ENCODE measurements at regions of chr2 and their contacts with region 1.

Region 1: DNA sequence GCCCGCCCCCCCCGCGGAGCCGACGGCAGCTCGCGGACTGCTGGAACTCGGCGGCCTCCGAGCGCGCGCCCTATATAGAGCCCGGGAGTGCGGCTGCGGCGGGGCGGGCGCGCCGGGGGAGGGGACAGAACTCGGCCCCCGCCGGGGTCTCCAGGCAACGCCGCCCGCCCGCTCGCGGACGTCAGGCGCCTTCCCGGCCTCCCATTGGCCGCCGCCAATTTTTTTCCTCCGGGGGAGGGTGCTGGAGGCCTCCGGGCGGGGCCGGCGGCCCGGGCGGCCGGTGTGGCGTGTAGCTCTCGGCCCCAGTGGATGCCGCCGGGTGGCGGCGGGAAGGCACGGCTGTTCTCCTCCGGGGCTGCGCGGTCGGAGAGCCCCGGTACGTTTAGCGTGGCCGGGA is at the start of gene ZFP36L2:
- DNase-seq: no peak
- ATAC-seq: peak; percentile 69
- H3K4me3 ChIP-seq: peak within 1 kb of the TSS; percentile 84
- H3K27ac ChIP-seq: peak within 1 kb of the TSS; percentile 97
- H3K4me1 ChIP-seq: peaks cover 22% of the 10 kb centered on the region
- H3K27me3 ChIP-seq: no peaks in the 10 kb centered on the region
- CTCF ChIP-seq: no peak
- EP300 ChIP-seq: peak in 1 of 2 experiments; percentile 40; a peak in 1 of 4 replicates
- POLR2A ChIP-seq: no peak
- RAD21 ChIP-seq: no peak
- polyA plus RNA-seq, gene ZFP36L2: 25.5 to 43.3 TPM

Region 2: GRCh38 chr2:42828487-42829425 is 397.8 kb before region 1 on chr2:
- CTCF ChIA-PET with region 1: interaction called, 5 read pairs
- POLR2A ChIA-PET with region 1: no interaction called
- RAD21 ChIA-PET with region 1: interaction called, 5 read pairs
- SMC1A ChIA-PET with region 1: interaction called, 4 read pairs
- in situ Hi-C with region 1: no loop called
- intact Hi-C with region 1: loop called (anchors 2 kb)
- DNase-seq: peak; percentile 15
- ATAC-seq: peak; percentile 97
- H3K4me3 ChIP-seq: no peak overlapping the region
- H3K27ac ChIP-seq: no peak overlapping the region
- H3K4me1 ChIP-seq: no peaks in the 10 kb centered on the region
- H3K27me3 ChIP-seq: no peaks in the 10 kb centered on the region; a peak in 1 of 4 replicates
- CTCF ChIP-seq: peak; percentile 92 to 98 (median 93)
- EP300 ChIP-seq: no peak
- POLR2A ChIP-seq: no peak
- RAD21 ChIP-seq: peak; percentile 82

Region 3: DNA sequence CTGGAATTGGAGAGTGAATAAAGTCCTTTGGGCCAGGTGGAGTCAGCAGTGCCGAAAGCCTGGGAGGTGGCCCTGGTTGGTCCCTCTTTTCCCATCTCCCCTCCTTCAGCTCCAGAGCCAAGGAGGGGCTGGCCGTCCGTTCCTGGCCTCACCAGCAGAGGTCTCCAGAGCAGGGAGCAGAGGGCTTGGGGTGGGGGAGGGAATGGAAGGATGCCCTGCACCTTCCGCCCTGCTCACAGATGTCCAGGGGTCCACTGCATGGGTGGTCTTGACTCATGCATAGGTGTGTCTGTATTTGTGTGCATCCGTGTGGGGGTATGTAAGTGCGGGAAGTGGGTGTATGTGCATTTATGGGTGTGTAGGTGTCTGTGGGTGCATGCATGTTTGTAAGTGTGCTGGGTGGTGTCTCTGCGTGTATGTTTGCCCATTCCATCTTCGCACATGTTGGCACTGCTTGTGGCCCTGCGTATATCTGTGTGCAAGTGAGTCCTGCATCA is 202.0 kb before region 1 on chr2:
- CTCF ChIA-PET with region 1: interaction called, 47 read pairs
- POLR2A ChIA-PET with region 1: interaction called, 3 read pairs
- RAD21 ChIA-PET with region 1: interaction called, 32 read pairs
- SMC1A ChIA-PET with region 1: interaction called, 37 read pairs
- in situ Hi-C with region 1: no loop called
- intact Hi-C with region 1: loop called (anchors 2 kb)
- DNase-seq: no peak
- ATAC-seq: peak; percentile 93
- H3K4me3 ChIP-seq: no peak overlapping the region
- H3K27ac ChIP-seq: no peak overlapping the region
- H3K4me1 ChIP-seq: no peaks in the 10 kb centered on the region
- H3K27me3 ChIP-seq: no peaks in the 10 kb centered on the region; a peak in 1 of 4 replicates
- CTCF ChIP-seq: peak; percentile 76 to 87 (median 81)
- EP300 ChIP-seq: no peak
- POLR2A ChIP-seq: no peak
- RAD21 ChIP-seq: peak; percentile 80

Region 4: DNA sequence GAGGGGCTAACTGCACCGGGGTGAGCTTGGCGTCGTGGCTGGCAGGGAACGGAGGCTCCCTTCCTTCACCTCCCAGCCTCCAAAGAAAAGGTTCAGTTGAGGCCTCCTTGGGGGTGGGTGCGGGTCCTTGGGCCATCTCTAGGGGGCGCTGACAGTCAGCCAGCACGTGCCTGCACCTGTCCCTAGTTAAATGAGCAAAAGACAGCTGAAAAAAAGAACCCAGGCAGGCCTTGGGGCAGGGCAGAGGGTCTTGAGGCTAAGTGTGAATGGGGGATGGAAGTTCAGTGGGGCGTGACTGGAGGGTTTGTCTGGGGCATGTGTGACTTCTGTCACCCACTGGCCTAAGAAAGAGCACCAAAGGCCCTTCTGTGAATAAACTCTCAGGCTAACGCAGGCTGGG is 56.6 kb before region 1 on chr2:
- CTCF ChIA-PET with region 1: interaction called, 103 read pairs
- POLR2A ChIA-PET with region 1: interaction called, 11 read pairs
- RAD21 ChIA-PET with region 1: interaction called, 70 read pairs
- SMC1A ChIA-PET with region 1: interaction called, 147 read pairs
- in situ Hi-C with region 1: no loop called
- intact Hi-C with region 1: loop called (anchors 2 kb)
- DNase-seq: no peak
- ATAC-seq: peak; percentile 47
- H3K4me3 ChIP-seq: no peak overlapping the region
- H3K27ac ChIP-seq: no peak overlapping the region
- H3K4me1 ChIP-seq: peaks cover 35% of the 10 kb centered on the region
- H3K27me3 ChIP-seq: no peaks in the 10 kb centered on the region; a peak in 1 of 4 replicates
- CTCF ChIP-seq: peak; percentile 64 to 82 (median 81)
- EP300 ChIP-seq: no peak
- POLR2A ChIP-seq: no peak
- RAD21 ChIP-seq: peak; percentile 62

Region 5: GRCh38 chr2:43387092-43388062 is 160.8 kb after region 1 on chr2:
- CTCF ChIA-PET with region 1: interaction called, 14 read pairs
- POLR2A ChIA-PET with region 1: interaction called, 3 read pairs
- RAD21 ChIA-PET with region 1: interaction called, 50 read pairs
- SMC1A ChIA-PET with region 1: interaction called, 39 read pairs
- in situ Hi-C with region 1: no loop called
- intact Hi-C with region 1: loop called (anchors 5 kb)
- DNase-seq: peak; percentile 86
- ATAC-seq: peak; percentile 84
- H3K4me3 ChIP-seq: peak overlapping the region; percentile 56
- H3K27ac ChIP-seq: peak overlapping the region; percentile 99
- H3K4me1 ChIP-seq: peaks cover 53% of the 10 kb centered on the region
- H3K27me3 ChIP-seq: no peaks in the 10 kb centered on the region
- CTCF ChIP-seq: no peak
- EP300 ChIP-seq: peak; percentile 81 to 92; a peak in 3 of 4 replicates
- POLR2A ChIP-seq: no peak
- RAD21 ChIP-seq: no peak

Region 6: DNA sequence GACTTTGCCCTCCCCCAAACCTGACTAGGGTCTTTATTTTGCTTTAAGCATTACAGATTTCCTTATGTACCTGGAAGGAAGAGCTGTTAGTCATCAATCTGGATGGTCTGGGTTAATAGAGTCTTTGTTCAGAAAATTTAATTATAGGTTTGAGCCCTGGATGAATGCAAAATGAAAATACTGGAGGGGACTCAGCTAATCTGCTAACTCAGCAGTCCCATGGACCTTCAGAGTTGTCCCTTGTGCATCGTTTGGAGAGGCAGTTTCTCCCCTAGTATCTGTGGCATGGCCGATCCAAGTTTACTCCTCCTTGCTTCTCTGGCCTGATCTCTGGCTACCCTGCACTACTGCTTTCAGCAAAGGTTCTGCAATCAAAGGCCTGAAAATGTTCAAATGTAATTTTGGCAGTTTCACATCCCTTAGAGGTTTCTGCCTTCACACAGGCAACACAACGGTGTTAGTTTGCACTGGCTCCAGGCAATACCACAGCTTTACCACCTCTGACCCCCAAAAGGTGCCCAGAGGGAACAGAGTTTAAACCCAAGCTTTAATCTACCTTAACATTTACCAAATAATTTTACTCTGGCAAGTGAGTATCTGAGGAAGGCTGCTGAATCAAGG is 235.0 kb after region 1 on chr2:
- CTCF ChIA-PET with region 1: interaction called, 11 read pairs
- POLR2A ChIA-PET with region 1: interaction called, 3 read pairs
- RAD21 ChIA-PET with region 1: interaction called, 10 read pairs
- SMC1A ChIA-PET with region 1: interaction called, 9 read pairs
- in situ Hi-C with region 1: no loop called
- intact Hi-C with region 1: no loop called
- DNase-seq: peak; percentile 81
- ATAC-seq: peak; percentile 97
- H3K4me3 ChIP-seq: peak overlapping the region; percentile 12; the same call in 1 of the 2 replicates
- H3K27ac ChIP-seq: peak overlapping the region; percentile 76
- H3K4me1 ChIP-seq: peaks cover 40% of the 10 kb centered on the region
- H3K27me3 ChIP-seq: no peaks in the 10 kb centered on the region
- CTCF ChIP-seq: no peak
- EP300 ChIP-seq: peak; percentile 53 to 62; a peak in 2 of 4 replicates
- POLR2A ChIP-seq: peak; percentile 54
- RAD21 ChIP-seq: peak; percentile 24; the same call in 1 of the 2 replicates

Region 7: GRCh38 chr2:43559391-43560230 is 333.1 kb after region 1 on chr2:
- CTCF ChIA-PET with region 1: interaction called, 5 read pairs
- POLR2A ChIA-PET with region 1: no interaction called
- RAD21 ChIA-PET with region 1: interaction called, 7 read pairs
- SMC1A ChIA-PET with region 1: interaction called, 3 read pairs
- in situ Hi-C with region 1: no loop called
- intact Hi-C with region 1: loop called (anchors 10 kb)
- DNase-seq: peak; percentile 45
- ATAC-seq: peak; percentile 95
- H3K4me3 ChIP-seq: peak overlapping the region; percentile 27; the same call in 1 of the 2 replicates
- H3K27ac ChIP-seq: peak overlapping the region; percentile 50
- H3K4me1 ChIP-seq: peaks cover 19% of the 10 kb centered on the region
- H3K27me3 ChIP-seq: no peaks in the 10 kb centered on the region
- CTCF ChIP-seq: no peak
- EP300 ChIP-seq: peak; percentile 32 to 38; a peak in 2 of 4 replicates
- POLR2A ChIP-seq: no peak
- RAD21 ChIP-seq: no peak

Measured in GM12878 (cell line).